CD4-positive, alpha-beta T cell (primary cell): ENCODE measurements at regions of chr19 and their contacts with region 1.

Region 1: GRCh38 chr19:925526-926322 is at the start of gene ARID3A:
- DNase-seq: peak; percentile 55 to 87 (median 72)
- ATAC-seq: peak; percentile 66
- H3K4me3 ChIP-seq: peak within 1 kb of the TSS; percentile 83
- H3K4me3 Mint-ChIP-seq: peak within 1 kb of the TSS; percentile 86
- H3K27ac ChIP-seq: peak within 1 kb of the TSS in 1 of 2 donors; percentile 60
- H3K27ac Mint-ChIP-seq: peak within 1 kb of the TSS; percentile 36
- H3K4me1 ChIP-seq: peaks cover 44% of the 10 kb centered on the region
- H3K4me1 Mint-ChIP-seq: peaks cover 15% of the 10 kb centered on the region
- H3K27me3 ChIP-seq: no peaks in the 10 kb centered on the region
- H3K27me3 Mint-ChIP-seq: no peaks in the 10 kb centered on the region
- CTCF ChIP-seq: no peak
- total RNA-seq, gene ARID3A: 3.7 to 4.1 TPM

Region 2: DNA sequence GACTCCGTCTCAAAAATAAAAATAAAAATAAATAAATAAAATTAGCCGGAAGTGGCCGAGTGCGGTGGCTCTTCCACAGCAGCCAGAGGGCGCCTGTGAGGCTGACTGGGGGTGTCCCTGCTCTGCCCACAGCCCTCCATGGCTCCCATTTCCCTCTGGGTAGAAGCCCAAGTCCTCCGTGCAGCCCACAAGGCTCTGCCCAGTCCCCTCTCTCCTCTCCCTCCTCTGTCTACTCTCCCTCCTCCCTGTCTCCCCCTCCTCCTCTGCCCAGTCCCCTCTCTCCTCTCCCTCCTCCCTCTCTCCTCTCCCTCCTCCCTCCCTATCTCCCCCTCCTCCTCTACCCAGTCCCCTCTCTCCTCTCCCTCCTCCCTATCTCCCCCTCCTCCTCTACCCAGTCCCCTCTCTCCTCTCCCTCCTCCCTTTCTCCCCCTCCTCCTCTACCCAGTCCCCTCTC is 154.4 kb before region 1 on chr19:
- CTCF ChIA-PET with region 1: interaction called, 3 read pairs
- POLR2A ChIA-PET with region 1: no interaction called
- intact Hi-C with region 1: loop called (anchors 1 kb)
- DNase-seq: peak in 5 of 14 experiments; percentile 13 to 69 (median 31)
- ATAC-seq: peak; percentile 56
- H3K4me3 ChIP-seq: no peak overlapping the region
- H3K4me3 Mint-ChIP-seq: no peak overlapping the region
- H3K27ac ChIP-seq: no peak overlapping the region
- H3K27ac Mint-ChIP-seq: no peak overlapping the region
- H3K4me1 ChIP-seq: no peaks in the 10 kb centered on the region
- H3K4me1 Mint-ChIP-seq: peaks cover 4% of the 10 kb centered on the region
- H3K27me3 ChIP-seq: no peaks in the 10 kb centered on the region
- H3K27me3 Mint-ChIP-seq: peaks cover 9% of the 10 kb centered on the region
- CTCF ChIP-seq: no peak

Region 3: GRCh38 chr19:944171-944567 is 18.4 kb after region 1 on chr19:
- CTCF ChIA-PET with region 1: no interaction called
- POLR2A ChIA-PET with region 1: no interaction called
- intact Hi-C with region 1: no loop called
- DNase-seq: peak in 1 of 14 experiments; percentile 45
- ATAC-seq: no peak
- H3K4me3 ChIP-seq: no peak overlapping the region
- H3K4me3 Mint-ChIP-seq: no peak overlapping the region
- H3K27ac ChIP-seq: no peak overlapping the region
- H3K27ac Mint-ChIP-seq: no peak overlapping the region
- H3K4me1 ChIP-seq: peaks cover 27% of the 10 kb centered on the region
- H3K4me1 Mint-ChIP-seq: peaks cover 18% of the 10 kb centered on the region
- H3K27me3 ChIP-seq: no peaks in the 10 kb centered on the region
- H3K27me3 Mint-ChIP-seq: no peaks in the 10 kb centered on the region
- CTCF ChIP-seq: no peak

Region 4: DNA sequence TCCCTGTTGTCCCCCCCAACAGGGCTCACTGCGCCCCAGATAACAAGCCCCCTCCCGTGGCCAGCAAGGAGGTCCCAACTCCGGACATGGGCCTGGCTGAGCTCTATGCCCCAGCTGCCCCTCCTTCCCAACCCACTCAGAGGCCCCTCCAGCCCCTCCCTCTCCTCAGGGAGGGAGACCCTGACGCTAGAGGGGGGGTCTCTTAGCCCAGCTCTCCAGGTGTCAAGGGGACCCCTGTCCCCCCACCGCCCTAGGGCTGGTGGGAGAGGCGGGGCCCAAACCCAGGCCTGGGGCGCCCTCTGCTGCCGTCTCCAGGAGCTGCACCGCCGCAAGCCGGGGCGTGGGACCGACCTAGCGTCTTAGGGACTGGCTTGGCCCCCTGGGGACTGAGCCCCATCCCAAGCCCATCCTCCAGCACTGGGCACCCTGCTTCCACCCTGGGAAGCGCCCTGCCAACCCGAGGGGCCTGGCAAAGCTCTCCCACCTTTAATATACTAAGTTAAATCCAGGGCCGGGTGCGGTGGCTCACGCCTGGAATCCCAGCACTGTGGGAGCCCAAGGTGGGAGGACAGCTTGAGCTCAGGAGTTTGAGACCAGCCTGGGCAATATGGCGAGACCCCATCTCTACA is 75.9 kb after region 1 on chr19:
- CTCF ChIA-PET with region 1: interaction called, 3 read pairs
- POLR2A ChIA-PET with region 1: no interaction called
- intact Hi-C with region 1: loop called (anchors 1 kb)
- DNase-seq: peak in 13 of 14 experiments; percentile 62 to 82 (median 71)
- ATAC-seq: peak; percentile 82
- H3K4me3 ChIP-seq: no peak overlapping the region
- H3K4me3 Mint-ChIP-seq: no peak overlapping the region
- H3K27ac ChIP-seq: no peak overlapping the region
- H3K27ac Mint-ChIP-seq: no peak overlapping the region
- H3K4me1 ChIP-seq: peaks cover 23% of the 10 kb centered on the region
- H3K4me1 Mint-ChIP-seq: peaks cover 7% of the 10 kb centered on the region
- H3K27me3 ChIP-seq: peaks cover 30 to 40% of the 10 kb centered on the region in 2 experiments
- H3K27me3 Mint-ChIP-seq: peaks cover 26% of the 10 kb centered on the region
- CTCF ChIP-seq: peak; percentile 91

Region 5: GRCh38 chr19:1131738-1132551 is 206.2 kb after region 1 on chr19:
- CTCF ChIA-PET with region 1: no interaction called
- POLR2A ChIA-PET with region 1: no interaction called
- intact Hi-C with region 1: no loop called
- DNase-seq: peak; percentile 62 to 94 (median 88)
- ATAC-seq: peak; percentile 69
- H3K4me3 ChIP-seq: peak overlapping the region; percentile 95
- H3K4me3 Mint-ChIP-seq: peak overlapping the region; percentile 90
- H3K27ac ChIP-seq: peak overlapping the region; percentile 87 to 92
- H3K27ac Mint-ChIP-seq: peak overlapping the region; percentile 96
- H3K4me1 ChIP-seq: peaks cover 90% of the 10 kb centered on the region
- H3K4me1 Mint-ChIP-seq: peaks cover 36% of the 10 kb centered on the region
- H3K27me3 ChIP-seq: no peaks in the 10 kb centered on the region
- H3K27me3 Mint-ChIP-seq: no peaks in the 10 kb centered on the region
- CTCF ChIP-seq: no peak